Dorsolateral prefrontal cortex (tissue), 120 donors: ENCODE measurements at regions of chr1 and their contacts with region 1.

Region 1: DNA sequence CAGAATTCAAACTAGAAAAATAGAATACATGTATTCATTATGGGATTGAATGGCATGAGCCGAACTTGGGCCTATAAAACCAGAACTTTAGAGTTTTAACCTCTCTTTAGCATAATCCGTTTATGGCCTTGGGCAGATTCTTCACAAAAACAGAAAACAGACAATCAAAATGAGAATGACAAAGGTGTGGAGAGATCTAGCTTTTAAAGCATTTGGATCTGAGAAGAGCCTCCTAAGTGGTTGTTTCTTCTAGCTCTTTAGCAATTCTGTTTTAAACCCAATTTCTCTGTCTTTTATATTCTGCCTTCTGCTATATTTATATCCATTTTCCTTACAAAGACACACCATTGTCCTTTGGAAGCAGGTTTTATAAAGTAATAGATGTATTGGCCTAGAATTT is 160.2 kb downstream of the RPS6KC1 start:
- DNase-seq: no peak
- H3K4me3 ChIP-seq: no peak overlapping the region
- H3K27ac ChIP-seq: no peak overlapping the region
- H3K27me3 ChIP-seq: no peaks in the 10 kb centered on the region
- CTCF ChIP-seq: no peak

Region 2: GRCh38 chr1:213186168-213186567 is 25.0 kb before region 1 on chr1:
- intact Hi-C with region 1: loop called in 1 of 2 experiments (anchors 2 kb)
- DNase-seq: no peak
- H3K4me3 ChIP-seq: no peak overlapping the region
- H3K27ac ChIP-seq: no peak overlapping the region
- H3K27me3 ChIP-seq: no peaks in the 10 kb centered on the region
- CTCF ChIP-seq: no peak

Region 3: GRCh38 chr1:214337511-214337910 is 1126.3 kb after region 1 on chr1:
- intact Hi-C with region 1: no loop called
- DNase-seq: no peak
- H3K4me3 ChIP-seq: no peak overlapping the region
- H3K27ac ChIP-seq: peak overlapping the region in 28 of 59 donors; percentile 0 to 75 (median 48)
- H3K27me3 ChIP-seq: no peaks in the 10 kb centered on the region
- CTCF ChIP-seq: no peak